Activated CD4-positive, alpha-beta memory T cell treated with anti-CD3 and anti-CD28 coated beads for 36 hours (primary cell): ENCODE measurements at regions of chr1 and their contacts with region 1.

Region 1: DNA sequence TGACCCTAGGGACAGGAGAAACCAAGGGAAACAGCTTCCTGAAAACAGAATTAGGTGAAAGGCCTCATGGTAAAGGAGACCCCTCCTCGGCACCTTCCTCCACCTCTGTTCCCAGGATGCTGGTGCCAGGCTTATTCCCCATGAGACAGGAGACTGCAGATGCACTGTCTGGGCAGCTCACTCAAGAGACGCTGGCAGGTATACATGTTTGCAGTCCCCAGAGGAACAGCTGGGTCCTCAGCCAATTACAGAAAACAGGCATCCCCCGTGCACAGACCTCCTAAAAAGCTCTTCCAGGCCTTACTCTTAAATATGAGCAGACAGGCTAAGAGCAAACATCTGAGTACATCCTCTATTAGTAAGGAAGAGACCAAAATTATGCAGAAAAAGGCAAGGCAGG is 6.5 kb downstream of the CCSAP start:
- DNase-seq: no peak
- H3K4me3 Mint-ChIP-seq: no peak overlapping the region
- H3K27ac Mint-ChIP-seq: no peak overlapping the region
- H3K4me1 Mint-ChIP-seq: peaks cover 44% of the 10 kb centered on the region
- H3K27me3 Mint-ChIP-seq: no peaks in the 10 kb centered on the region

Region 2: DNA sequence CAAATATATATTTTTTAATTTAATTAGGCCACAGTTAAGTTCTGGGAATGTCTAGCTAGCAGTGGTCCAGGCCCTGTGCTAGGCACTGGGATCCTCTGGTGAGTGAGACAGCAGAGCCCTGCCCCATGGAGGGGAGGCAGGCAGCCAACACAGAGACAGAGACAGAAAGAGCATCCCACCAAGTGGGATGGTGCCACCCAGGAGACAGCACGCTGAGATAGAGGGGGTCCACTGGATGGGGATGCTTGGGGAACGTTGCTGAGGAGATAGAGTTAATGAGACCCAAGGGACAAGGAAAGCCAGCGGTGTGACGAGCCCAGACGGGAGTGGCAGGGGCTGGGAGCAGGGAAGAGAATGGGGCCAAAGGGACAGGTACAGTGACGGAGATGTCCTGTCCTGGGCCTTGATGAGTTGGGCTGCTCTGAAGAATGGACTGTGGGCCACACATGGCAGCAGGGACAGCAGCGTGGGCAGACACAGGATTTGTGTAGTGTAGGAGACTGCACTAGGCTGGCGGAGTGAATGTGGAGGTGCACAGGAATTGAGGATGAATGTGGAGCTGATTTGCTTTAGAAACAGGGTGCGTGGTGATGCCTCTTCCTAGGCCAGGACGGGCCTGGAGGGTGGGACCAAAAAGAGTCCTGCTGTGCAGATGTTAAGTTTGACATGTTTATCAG is 42.7 kb before region 1 on chr1:
- CTCF ChIA-PET with region 1: no interaction called
- POLR2A ChIA-PET with region 1: no interaction called
- intact Hi-C with region 1: loop called (anchors 1 kb)
- DNase-seq: no peak
- H3K4me3 Mint-ChIP-seq: no peak overlapping the region
- H3K27ac Mint-ChIP-seq: no peak overlapping the region
- H3K4me1 Mint-ChIP-seq: no peaks in the 10 kb centered on the region
- H3K27me3 Mint-ChIP-seq: no peaks in the 10 kb centered on the region